Gastrocnemius medialis (tissue), 4 donors: ENCODE measurements at regions of chr18 and their contacts with region 1.

Region 1: GRCh38 chr18:77461062-77461688 is 211.5 kb downstream of the GALR1 start:
- DNase-seq: no peak
- ATAC-seq: no peak
- H3K4me3 ChIP-seq: no peak overlapping the region
- H3K27ac ChIP-seq: no peak overlapping the region
- H3K4me1 ChIP-seq: no peaks in the 10 kb centered on the region
- H3K27me3 ChIP-seq: no peaks in the 10 kb centered on the region
- CTCF ChIP-seq: no peak
- POLR2A ChIP-seq: no peak

Region 2: DNA sequence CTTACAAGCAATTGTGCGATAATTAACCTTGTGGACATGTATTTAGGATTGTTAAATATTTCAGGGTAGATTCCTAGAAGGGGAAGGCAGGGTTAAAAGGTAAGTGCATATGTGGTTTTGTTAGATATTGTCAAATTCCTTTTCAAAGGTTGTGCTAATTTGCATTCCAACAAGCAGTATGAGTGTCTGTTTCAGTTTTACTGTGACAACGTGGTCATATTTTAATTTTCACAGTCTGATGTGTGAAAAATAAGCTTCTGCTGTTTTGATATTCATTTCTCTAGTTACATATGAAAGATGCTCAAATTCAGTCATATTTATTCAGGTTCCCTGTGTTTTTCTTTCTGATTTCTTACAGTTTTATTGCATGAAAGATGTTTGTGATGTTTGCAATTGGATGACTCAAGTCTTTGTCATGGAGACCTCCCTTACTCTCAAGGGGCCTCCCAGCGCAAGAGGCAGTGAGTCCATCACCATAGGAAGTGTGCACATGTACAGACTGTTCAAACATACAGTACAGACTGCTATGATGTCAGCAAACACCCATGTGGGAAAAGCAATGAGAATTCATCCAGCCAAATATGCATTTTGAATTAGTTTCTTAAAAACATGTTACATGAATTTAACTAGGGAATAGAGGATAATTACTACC is 99.3 kb after region 1 on chr18:
- in situ Hi-C with region 1: loop called in 1 of 4 experiments (anchors 25 kb)
- intact Hi-C with region 1: no loop called
- DNase-seq: no peak
- ATAC-seq: no peak
- H3K4me3 ChIP-seq: no peak overlapping the region
- H3K27ac ChIP-seq: no peak overlapping the region
- H3K4me1 ChIP-seq: no peaks in the 10 kb centered on the region
- H3K27me3 ChIP-seq: no peaks in the 10 kb centered on the region
- CTCF ChIP-seq: no peak
- POLR2A ChIP-seq: no peak

Region 3: DNA sequence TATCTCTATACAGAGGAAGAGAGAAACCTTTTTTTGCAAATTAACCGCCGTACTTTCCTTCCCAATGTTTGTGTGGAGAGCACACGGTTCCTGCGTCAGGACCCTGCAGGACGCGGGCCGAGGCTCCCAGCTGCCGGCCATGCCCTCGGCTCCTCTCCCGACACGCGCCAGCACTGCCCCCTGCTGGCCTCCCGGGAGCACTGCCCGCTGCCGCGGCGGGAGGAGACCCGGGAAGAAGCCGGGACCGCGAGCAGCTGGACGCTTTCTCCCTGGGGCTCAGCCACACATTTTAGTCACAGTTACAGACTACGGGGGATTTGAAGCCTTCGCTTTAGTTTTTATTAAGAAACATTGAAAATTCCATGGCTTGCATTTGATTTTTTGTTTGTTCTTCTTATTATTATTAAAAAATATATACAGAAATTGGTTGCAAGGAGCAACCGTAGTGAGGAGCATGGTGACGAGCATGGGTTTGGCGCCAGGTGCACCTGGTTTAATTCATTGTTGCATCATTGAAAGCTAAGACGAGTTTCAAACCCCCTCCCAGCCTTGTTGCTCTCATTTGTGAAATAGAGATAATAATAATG is 189.7 kb after region 1 on chr18:
- in situ Hi-C with region 1: loop called in 1 of 4 experiments (anchors 25 kb)
- intact Hi-C with region 1: no loop called
- DNase-seq: peak; percentile 21 to 34
- ATAC-seq: no peak
- H3K4me3 ChIP-seq: no peak overlapping the region
- H3K27ac ChIP-seq: no peak overlapping the region
- H3K4me1 ChIP-seq: no peaks in the 10 kb centered on the region
- H3K27me3 ChIP-seq: peaks cover 0 to 4% (median 0%) of the 10 kb centered on the region in 3 donors
- CTCF ChIP-seq: peak; percentile 44 to 71 (median 67)
- POLR2A ChIP-seq: no peak